Right ventricle myocardium inferior (tissue), 1 donor: ENCODE measurements at regions of chrX and their contacts with region 1.

Region 1: GRCh38 chrX:123450221-123450620 is 266.1 kb downstream of the GRIA3 start:
- DNase-seq: no peak
- ATAC-seq: no peak

Region 2: GRCh38 chrX:123108513-123109427 is 341.5 kb before region 1 on chrX:
- intact Hi-C with region 1: no loop called
- DNase-seq: no peak
- ATAC-seq: no peak

Region 3: GRCh38 chrX:123698979-123699520 is 248.8 kb after region 1 on chrX:
- intact Hi-C with region 1: no loop called
- DNase-seq: no peak
- ATAC-seq: no peak

Region 4: DNA sequence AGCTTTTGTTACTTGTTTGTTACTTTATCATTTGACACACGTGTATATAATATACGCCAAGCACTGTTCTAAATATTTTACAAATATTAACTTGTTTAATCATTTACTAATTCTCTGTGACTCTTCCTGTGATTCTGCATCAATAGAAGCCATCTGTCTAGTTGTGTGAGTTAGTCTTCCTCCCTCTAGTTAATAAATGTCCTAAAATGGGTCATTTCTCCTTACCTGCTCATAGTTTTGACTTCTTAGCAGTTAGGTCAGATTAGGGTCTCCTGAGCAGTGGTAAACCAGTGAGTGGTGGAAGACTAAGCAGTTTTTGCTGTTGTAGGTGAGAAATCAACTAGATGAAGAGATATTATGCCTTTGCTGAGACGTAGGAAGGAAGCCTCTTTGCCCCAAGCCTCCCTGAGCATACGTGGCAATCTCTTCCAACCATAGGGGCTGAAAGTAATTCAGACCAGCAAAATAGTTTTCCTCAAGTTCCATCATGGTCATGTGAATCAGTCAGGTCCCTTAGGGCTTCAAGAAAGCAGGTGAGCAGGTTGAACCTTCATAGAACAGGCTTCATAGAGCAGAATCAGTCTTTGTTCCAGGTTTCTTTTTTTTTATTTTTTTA is 321.3 kb after region 1 on chrX:
- intact Hi-C with region 1: loop called (anchors 5 kb)
- DNase-seq: no peak
- ATAC-seq: no peak